Activated CD4-positive, alpha-beta T cell treated with anti-CD3 and anti-CD28 coated beads, Interleukin-2, amount 10 ng/mL, durations not matched to agents 7 days and 5 days (primary cell): ENCODE measurements at regions of chr10 and their contacts with region 1.

Region 1: DNA sequence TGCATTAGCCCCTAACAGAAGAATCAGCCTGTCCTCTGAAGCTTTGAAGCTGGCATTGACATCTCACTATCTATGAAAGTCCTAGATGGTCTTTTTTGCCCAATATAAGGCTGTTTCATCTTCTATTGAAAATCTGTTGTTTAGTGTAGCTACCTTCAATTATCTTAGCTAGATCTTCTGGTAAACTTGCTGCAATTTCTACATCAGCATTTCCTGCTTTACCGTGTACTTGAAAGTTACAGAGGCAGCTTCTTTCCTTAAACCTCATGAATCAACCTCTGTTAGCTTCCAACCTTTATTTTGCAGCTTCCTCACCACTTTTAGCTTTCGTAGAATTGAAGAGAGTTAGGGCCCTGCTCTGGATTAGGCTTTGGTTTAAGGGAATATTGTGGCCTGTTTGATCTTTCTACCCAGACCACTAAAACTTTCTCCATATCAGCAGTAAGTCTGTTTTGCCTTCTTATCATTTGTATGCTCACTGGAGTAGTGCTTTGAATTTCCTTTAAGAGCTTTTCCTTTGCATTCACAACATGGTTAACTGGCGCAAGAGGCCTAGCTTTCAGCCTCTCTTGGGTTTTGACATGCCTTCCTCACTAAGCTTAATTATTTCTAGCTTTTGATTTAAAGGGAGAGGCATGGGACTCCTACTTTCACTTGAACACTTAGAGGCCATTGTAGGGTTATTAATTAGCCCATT is 32.5 kb downstream of the ARID5B start:
- DNase-seq: no peak
- H3K4me3 Mint-ChIP-seq: peak overlapping the region; percentile 17
- H3K27ac Mint-ChIP-seq: peak overlapping the region; percentile 86
- H3K4me1 Mint-ChIP-seq: peaks cover 81% of the 10 kb centered on the region
- H3K27me3 Mint-ChIP-seq: no peaks in the 10 kb centered on the region

Region 2: DNA sequence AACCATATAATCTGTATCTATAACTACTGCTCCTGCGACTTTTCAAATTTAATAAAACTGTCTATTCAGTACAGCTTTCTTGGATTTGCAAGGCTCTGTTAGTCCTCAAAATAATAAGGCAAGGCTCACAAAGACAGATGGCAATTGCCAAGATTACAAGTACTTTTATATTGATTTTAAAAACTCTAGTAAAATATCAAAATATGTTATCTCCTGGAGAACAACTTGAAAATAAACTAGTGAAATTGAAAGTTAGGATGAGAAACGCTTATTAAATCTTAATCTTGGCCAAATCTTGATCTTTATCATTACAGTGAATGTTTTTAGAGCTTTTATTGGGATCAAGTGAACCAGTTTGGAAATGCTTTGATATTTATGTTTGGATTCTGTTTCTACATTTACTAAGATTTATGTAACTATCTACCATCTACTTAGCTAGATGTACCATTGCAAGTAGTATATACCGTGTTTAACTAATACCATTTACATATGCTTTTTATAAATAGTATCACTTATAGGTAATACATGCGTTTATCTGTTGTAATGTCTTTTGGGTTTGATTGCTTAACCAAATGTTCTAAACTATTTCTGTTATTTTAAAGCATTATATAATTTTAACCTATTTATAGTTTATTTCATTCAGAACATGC is 201.3 kb before region 1 on chr10:
- CTCF ChIA-PET with region 1: no interaction called
- POLR2A ChIA-PET with region 1: no interaction called
- DNase-seq: no peak
- H3K4me3 Mint-ChIP-seq: no peak overlapping the region
- H3K27ac Mint-ChIP-seq: no peak overlapping the region
- H3K4me1 Mint-ChIP-seq: peaks cover 3% of the 10 kb centered on the region
- H3K27me3 Mint-ChIP-seq: peaks cover 48% of the 10 kb centered on the region

Region 3: DNA sequence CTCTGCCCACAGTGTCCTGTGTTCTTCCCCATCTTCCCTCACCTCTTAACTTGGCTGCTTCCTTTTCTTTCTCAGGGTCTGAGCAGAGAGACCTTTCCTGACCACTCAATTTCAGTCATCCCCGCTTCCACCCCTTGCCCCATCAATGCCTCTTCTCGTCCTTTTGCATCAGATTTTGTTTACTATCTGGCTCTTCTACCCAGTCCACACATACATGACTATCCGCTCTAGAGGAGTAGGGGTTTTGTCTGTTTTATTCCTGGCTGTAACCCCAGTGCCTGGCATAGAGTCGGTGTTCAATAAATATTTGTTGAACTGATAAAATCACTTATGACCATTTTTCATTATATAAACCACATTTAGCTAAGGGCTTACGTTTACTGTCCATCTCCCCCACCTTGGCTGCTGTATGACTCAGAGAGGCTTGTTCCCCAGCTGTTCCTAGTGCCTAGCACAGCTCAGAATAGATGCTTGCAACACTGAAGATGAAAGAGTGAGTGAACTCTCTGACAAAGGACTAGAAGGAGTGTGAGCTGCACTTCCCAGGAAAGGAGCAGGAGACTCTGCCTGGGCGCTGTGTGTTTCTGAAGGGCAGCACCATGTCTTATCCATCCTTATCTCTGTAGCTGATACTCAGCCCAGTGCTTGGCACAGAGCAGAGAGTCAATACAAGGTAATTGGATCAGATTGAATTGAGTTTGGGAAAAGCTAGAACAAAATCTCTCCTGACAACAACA is 10.6 kb before region 1 on chr10:
- CTCF ChIA-PET with region 1: interaction called, 15 read pairs
- POLR2A ChIA-PET with region 1: interaction called, 3 read pairs
- DNase-seq: no peak
- H3K4me3 Mint-ChIP-seq: no peak overlapping the region
- H3K27ac Mint-ChIP-seq: peak overlapping the region; percentile 74
- H3K4me1 Mint-ChIP-seq: peaks cover 45% of the 10 kb centered on the region
- H3K27me3 Mint-ChIP-seq: no peaks in the 10 kb centered on the region